Left ventricle myocardium inferior (tissue), 1 donor: ENCODE measurements at regions of chr1 and their contacts with region 1.

Region 1: GRCh38 chr1:38360807-38361206 is 314.2 kb upstream of the POU3F1 start:
- DNase-seq: no peak
- H3K4me3 ChIP-seq: no peak overlapping the region
- H3K27ac ChIP-seq: no peak overlapping the region
- H3K4me1 ChIP-seq: no peaks in the 10 kb centered on the region
- H3K27me3 ChIP-seq: peaks cover 25% of the 10 kb centered on the region
- CTCF ChIP-seq: no peak

Region 2: DNA sequence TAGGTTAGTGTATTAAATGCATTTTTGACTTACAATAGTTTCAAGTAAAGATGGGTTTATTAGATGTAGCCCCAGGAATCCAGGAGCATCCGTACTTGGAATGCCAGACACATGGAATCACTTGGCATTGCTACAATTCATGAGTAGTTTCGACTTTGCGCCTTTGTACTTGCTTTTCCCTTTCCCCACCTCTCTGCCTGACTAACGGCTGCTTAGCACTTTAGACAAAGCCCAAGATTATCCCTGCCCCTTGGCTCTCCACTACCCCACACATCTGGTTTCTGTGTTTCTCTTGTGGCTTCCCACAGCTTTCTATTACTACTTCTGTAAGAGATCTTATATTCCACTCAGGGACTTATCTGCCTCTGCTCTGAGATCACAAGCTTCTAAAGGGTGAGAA is 83.5 kb after region 1 on chr1:
- intact Hi-C with region 1: loop called (anchors 10 kb)
- DNase-seq: no peak
- H3K4me3 ChIP-seq: no peak overlapping the region
- H3K27ac ChIP-seq: no peak overlapping the region
- H3K4me1 ChIP-seq: no peaks in the 10 kb centered on the region
- H3K27me3 ChIP-seq: peaks cover 72% of the 10 kb centered on the region
- CTCF ChIP-seq: no peak

Region 3: DNA sequence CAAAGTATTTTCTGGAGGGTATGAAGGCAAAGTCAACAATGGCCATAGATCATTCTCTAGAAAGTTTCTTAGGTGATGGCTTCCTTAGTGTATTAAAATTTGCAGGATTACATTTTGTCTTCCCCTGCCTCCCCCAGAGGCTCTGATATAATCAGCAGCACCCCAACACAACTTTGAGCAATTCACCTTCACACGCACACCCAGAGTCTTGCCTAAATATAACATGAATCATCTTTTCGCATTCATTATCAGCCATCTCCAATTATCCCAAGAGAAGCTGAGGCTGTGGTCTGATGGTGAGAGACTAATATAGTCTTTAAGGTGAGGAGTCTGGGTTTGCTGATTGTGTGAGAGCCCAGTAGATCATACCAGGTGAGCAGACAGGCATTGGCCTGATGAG is 155.8 kb after region 1 on chr1:
- intact Hi-C with region 1: no loop called
- DNase-seq: no peak
- H3K4me3 ChIP-seq: no peak overlapping the region
- H3K27ac ChIP-seq: no peak overlapping the region
- H3K4me1 ChIP-seq: peaks cover 3% of the 10 kb centered on the region
- H3K27me3 ChIP-seq: peaks cover 32% of the 10 kb centered on the region
- CTCF ChIP-seq: no peak